ENCODE measurements at regions of chr10 and their contacts with region 1.

Region 1: DNA sequence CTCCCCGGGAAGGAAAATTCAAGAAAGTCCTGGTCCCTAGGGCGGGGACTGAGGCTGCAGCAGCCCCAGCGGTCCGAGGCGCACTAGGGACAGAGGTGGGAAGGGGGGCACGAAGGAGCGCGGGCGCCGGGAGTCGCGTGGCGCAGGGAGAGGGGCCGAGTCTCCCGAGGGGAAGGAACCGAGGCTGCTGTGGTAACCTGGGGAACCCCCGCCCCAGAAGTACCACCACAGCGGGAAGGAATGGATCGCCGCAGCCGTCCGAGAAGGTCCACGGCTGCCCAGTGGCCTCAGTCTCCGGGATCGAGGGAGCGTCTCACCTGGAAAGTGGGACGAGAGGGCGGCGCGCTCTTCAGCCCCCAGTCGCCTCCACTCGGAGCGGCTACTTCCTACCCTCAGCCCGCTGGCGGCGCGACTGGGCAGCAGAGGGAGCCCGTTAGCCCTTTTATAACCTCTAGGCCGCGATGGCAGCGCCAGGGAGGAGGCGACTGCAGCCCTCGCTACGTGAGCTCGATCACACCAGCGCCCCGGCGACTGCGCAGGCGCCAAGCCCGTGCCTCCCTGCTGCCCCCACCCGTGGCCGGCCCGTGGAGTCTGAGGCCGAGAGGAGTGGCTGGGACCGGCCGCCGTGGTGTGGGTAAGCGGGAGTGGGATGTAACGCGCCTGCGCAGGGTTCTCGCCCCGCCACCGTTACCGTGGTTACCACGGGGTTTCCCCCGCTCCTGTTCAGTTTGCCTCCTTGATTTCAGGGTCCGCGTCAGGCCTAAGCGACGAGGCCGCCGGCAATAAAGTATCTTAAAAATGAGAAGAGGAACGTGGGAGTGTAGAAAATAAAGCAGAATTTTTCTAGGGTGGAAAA is at the start of gene P4HA1:
- DNase-seq: peak; percentile 96 to 100 (median 98)
- ATAC-seq: peak; percentile 84
- H3K4me3 ChIP-seq: peak within 1 kb of the TSS; percentile 72 to 92
- H3K4me3 Mint-ChIP-seq: peak within 1 kb of the TSS; percentile 85
- H3K27ac ChIP-seq: peak within 1 kb of the TSS; percentile 60 to 95
- H3K27ac Mint-ChIP-seq: peak within 1 kb of the TSS; percentile 96
- H3K4me1 ChIP-seq: peaks cover 18% of the 10 kb centered on the region
- H3K4me1 Mint-ChIP-seq: peaks cover 32% of the 10 kb centered on the region
- H3K27me3 ChIP-seq: no peaks in the 10 kb centered on the region
- H3K27me3 Mint-ChIP-seq: no peaks in the 10 kb centered on the region
- CTCF ChIP-seq: peak; percentile 70
- total RNA-seq, gene P4HA1: 9.0 to 10.1 TPM

Region 2: GRCh38 chr10:72954596-72955554 is 141.8 kb before region 1 on chr10 and contains the start of gene PLA2G12B:
- CTCF ChIA-PET with region 1: no interaction called
- POLR2A ChIA-PET with region 1: no interaction called
- intact Hi-C with region 1: no loop called
- DNase-seq: no peak
- ATAC-seq: no peak
- H3K4me3 ChIP-seq: no peak within 1 kb of the TSS
- H3K4me3 Mint-ChIP-seq: no peak within 1 kb of the TSS
- H3K27ac ChIP-seq: no peak within 1 kb of the TSS
- H3K27ac Mint-ChIP-seq: no peak within 1 kb of the TSS
- H3K4me1 ChIP-seq: no peaks in the 10 kb centered on the region
- H3K4me1 Mint-ChIP-seq: no peaks in the 10 kb centered on the region
- H3K27me3 ChIP-seq: no peaks in the 10 kb centered on the region
- H3K27me3 Mint-ChIP-seq: peaks cover 8% of the 10 kb centered on the region
- CTCF ChIP-seq: no peak
- total RNA-seq, gene PLA2G12B: not detected

Region 3: DNA sequence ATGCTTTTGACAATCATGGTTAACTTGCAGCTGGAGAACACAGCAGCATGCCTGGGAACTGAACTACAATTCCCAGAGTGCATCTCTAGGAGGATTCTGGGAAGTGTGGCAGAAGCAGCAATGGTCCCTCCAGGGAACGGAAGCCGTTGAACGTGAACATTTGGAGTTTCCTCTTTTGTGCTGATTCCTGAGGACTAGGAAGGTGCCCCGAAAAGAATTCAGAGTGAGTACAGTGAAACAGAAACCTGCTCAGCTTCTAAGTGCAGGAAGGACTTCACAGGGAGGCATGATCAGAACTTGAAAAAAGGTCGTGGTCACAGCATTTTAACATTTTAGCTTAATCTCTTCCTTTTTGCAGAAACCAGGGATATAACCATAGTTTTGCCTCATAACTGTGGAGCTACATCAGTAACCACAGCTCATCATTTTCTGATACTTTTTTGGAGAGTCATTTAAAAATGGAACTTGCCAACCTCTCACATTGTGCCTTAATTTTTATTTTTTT is 13.7 kb after region 1 on chr10 and contains the start of gene NUDT13:
- CTCF ChIA-PET with region 1: interaction called, 23 read pairs
- POLR2A ChIA-PET with region 1: interaction called, 30 read pairs
- intact Hi-C with region 1: loop called (anchors 1 kb)
- DNase-seq: peak; percentile 10 to 79 (median 48)
- ATAC-seq: peak; percentile 91
- H3K4me3 ChIP-seq: peak within 1 kb of the TSS; percentile 57 to 59
- H3K4me3 Mint-ChIP-seq: peak within 1 kb of the TSS; percentile 95
- H3K27ac ChIP-seq: peak within 1 kb of the TSS; percentile 36 to 73
- H3K27ac Mint-ChIP-seq: peak within 1 kb of the TSS; percentile 89
- H3K4me1 ChIP-seq: no peaks in the 10 kb centered on the region
- H3K4me1 Mint-ChIP-seq: peaks cover 12% of the 10 kb centered on the region
- H3K27me3 ChIP-seq: no peaks in the 10 kb centered on the region
- H3K27me3 Mint-ChIP-seq: no peaks in the 10 kb centered on the region
- CTCF ChIP-seq: no peak
- total RNA-seq, gene NUDT13: 0.50 to 0.71 TPM

Region 4: DNA sequence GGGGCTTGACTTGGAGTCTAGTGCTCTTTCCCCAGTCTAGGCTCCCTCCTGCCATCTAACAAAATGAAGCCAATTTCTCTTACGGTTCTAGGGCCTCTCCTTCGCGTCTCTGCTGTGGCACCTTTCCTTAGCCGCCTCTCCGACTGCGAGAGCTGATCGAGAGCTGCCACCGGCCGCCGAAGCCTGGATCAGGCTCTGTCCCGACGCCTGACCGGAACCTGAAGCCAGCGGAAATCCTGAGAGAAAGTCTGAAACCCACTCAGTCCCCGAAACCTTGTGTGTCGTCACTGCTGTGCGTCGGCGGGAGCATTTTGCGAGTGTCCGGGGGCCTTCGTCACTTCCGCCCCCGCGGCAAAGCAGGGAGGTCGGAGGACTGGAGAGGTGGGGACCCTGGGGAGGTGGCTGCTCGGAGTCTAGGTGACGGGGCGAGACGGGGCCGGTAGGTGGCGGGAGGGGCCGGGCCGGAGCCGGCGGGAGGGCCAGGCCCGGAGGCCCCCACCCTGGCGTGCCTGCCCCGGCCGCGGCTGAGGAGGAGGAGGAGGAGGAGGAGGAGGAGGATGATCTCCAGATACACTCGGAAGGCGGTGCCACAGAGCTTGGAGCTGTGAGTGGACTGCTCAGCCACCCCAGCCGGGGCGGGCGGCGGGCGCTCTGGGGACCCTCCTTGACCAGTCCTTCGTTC is 71.2 kb after region 1 on chr10 and contains the starts of genes ECD and FAM149B1:
- CTCF ChIA-PET with region 1: interaction called, 30 read pairs
- POLR2A ChIA-PET with region 1: interaction called, 5 read pairs
- intact Hi-C with region 1: loop called in 1 of 2 experiments (anchors 2 kb)
- DNase-seq: peak; percentile 74 to 96 (median 91)
- ATAC-seq: peak; percentile 93
- H3K4me3 ChIP-seq: peak within 1 kb of the TSS; percentile 77 to 92
- H3K4me3 Mint-ChIP-seq: peak within 1 kb of the TSS; percentile 100
- H3K27ac ChIP-seq: peak within 1 kb of the TSS; percentile 93 to 97
- H3K27ac Mint-ChIP-seq: peak within 1 kb of the TSS; percentile 100
- H3K4me1 ChIP-seq: peaks cover 29% of the 10 kb centered on the region
- H3K4me1 Mint-ChIP-seq: peaks cover 42% of the 10 kb centered on the region
- H3K27me3 ChIP-seq: no peaks in the 10 kb centered on the region
- H3K27me3 Mint-ChIP-seq: no peaks in the 10 kb centered on the region
- CTCF ChIP-seq: peak; percentile 16
- total RNA-seq, gene ECD: 56.5 to 59.1 TPM
- total RNA-seq, gene FAM149B1: 5.9 to 6.3 TPM

Region 5: DNA sequence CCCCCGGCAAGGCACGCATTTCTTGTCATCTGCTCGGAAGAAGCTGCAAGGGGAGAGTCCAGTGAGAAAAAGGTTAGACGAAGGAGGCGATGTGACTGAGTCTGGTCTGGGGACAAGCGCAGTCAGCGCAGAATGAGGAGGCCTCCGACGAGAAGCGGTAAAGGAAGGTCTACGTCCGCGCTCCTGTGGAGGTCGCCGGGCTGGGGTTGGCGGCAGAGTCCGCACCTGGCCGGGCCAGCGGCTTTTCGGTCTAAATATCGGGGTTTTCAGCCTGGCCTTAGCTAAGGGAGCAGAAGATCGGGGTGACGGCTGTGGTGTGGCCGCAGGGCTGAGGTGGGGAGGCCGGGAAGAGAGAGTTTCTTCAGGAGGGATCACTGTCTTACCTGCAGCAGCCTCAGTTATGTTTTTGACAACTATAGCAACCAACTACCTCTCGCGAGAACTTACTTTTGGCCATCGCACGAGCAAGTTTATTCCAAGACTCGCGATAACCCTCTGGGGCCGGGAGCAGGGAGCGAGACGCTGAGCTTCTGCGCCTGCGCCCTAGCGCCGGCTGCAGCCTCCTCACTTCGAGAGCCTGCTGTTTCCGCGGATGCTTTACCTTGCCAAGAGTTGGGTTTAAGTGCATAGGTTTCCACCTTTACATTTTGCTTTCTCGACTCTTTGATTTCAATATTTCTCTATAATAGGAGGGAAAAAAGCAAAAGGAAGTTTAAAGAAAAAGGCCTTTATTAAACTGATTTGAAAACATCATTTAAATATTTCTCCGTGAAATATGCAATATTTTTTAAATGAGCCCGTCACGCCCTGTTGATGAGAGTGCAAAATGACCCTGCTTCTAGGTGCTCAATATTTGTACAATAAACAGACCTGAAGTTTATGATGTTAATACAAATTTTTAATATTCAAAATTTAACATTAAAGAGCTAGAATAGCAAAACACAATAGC is 261.9 kb after region 1 on chr10 and contains the start of gene CFAP70:
- CTCF ChIA-PET with region 1: no interaction called
- POLR2A ChIA-PET with region 1: interaction called, 3 read pairs
- intact Hi-C with region 1: loop called in 1 of 2 experiments (anchors 5 kb)
- DNase-seq: peak; percentile 83 to 98 (median 90)
- ATAC-seq: peak; percentile 96
- H3K4me3 ChIP-seq: peak within 1 kb of the TSS; percentile 71 to 75
- H3K4me3 Mint-ChIP-seq: peak within 1 kb of the TSS; percentile 98
- H3K27ac ChIP-seq: peak within 1 kb of the TSS; percentile 78 to 88
- H3K27ac Mint-ChIP-seq: peak within 1 kb of the TSS; percentile 96
- H3K4me1 ChIP-seq: peaks cover 5% of the 10 kb centered on the region
- H3K4me1 Mint-ChIP-seq: peaks cover 16% of the 10 kb centered on the region
- H3K27me3 ChIP-seq: peaks cover 0 to 8% of the 10 kb centered on the region in 2 experiments
- H3K27me3 Mint-ChIP-seq: peaks cover 2% of the 10 kb centered on the region
- CTCF ChIP-seq: no peak
- total RNA-seq, gene CFAP70: 2.4 to 2.8 TPM

Region 6: GRCh38 chr10:73448384-73448783 is 351.7 kb after region 1 on chr10:
- CTCF ChIA-PET with region 1: no interaction called
- POLR2A ChIA-PET with region 1: no interaction called
- intact Hi-C with region 1: no loop called
- DNase-seq: no peak
- ATAC-seq: no peak
- H3K4me3 ChIP-seq: no peak overlapping the region
- H3K4me3 Mint-ChIP-seq: no peak overlapping the region
- H3K27ac ChIP-seq: no peak overlapping the region
- H3K27ac Mint-ChIP-seq: peak overlapping the region; percentile 9
- H3K4me1 ChIP-seq: no peaks in the 10 kb centered on the region
- H3K4me1 Mint-ChIP-seq: peaks cover 2% of the 10 kb centered on the region
- H3K27me3 ChIP-seq: no peaks in the 10 kb centered on the region
- H3K27me3 Mint-ChIP-seq: no peaks in the 10 kb centered on the region
- CTCF ChIP-seq: no peak

Measured in CD8-positive, alpha-beta T cell (primary cell).